GM12878 (cell line): ENCODE measurements at regions of chr10 and their contacts with region 1.

Region 1: DNA sequence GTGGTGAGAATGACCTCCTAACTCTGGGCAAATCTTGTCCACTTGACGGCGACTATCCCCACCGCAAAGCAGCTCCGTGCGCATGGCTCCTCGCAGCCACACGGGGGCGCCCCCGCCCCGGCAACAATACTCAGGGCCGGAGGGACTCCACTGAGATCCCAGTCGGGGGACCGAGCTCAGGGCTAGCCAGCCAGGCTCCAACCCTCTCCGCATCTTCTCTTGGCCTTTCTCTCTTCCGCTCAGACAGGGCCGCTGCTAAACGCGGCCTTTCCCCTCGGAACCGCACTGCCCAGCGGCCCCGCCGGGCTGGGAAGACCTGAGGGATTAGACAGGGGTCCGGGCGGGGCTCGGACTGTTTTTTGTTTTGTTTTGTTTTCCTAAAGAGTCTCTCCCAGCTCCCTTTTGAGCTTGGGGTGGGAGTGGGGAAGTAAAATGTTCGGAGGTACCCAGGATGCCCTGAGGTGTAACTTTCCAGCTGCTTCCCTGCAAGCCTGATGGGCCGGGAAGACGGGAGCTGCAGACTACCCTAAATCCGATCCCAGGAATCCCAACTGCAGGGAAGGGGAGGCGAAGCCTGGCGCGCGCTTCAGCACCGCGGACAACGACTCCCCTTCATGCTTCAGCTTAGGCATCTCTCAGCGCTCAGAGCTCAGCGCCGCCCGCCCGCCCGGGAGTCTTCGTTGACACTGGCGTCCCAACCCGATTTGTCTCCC is 2.7 kb downstream of the KCNIP2 start:
- DNase-seq: no peak
- ATAC-seq: peak; percentile 90
- H3K4me3 ChIP-seq: peak overlapping the region; percentile 81
- H3K27ac ChIP-seq: no peak overlapping the region
- H3K4me1 ChIP-seq: peaks cover 23% of the 10 kb centered on the region
- H3K27me3 ChIP-seq: no peaks in the 10 kb centered on the region
- CTCF ChIP-seq: peak; percentile 98 to 99 (median 98); a peak in 5 of 6 replicates
- EP300 ChIP-seq: no peak
- POLR2A ChIP-seq: no peak
- RAD21 ChIP-seq: peak; percentile 98

Region 2: GRCh38 chr10:101782811-101783735 is 57.8 kb before region 1 on chr10 and contains the start of gene NPM3:
- CTCF ChIA-PET with region 1: interaction called, 13 read pairs
- POLR2A ChIA-PET with region 1: no interaction called
- RAD21 ChIA-PET with region 1: interaction called, 4 read pairs
- SMC1A ChIA-PET with region 1: interaction called, 3 read pairs
- in situ Hi-C with region 1: no loop called
- intact Hi-C with region 1: no loop called
- DNase-seq: no peak
- ATAC-seq: peak; percentile 76
- H3K4me3 ChIP-seq: peak within 1 kb of the TSS; percentile 85
- H3K27ac ChIP-seq: peak within 1 kb of the TSS; percentile 71
- H3K4me1 ChIP-seq: peaks cover 41% of the 10 kb centered on the region
- H3K27me3 ChIP-seq: no peaks in the 10 kb centered on the region
- CTCF ChIP-seq: no peak
- EP300 ChIP-seq: no peak
- POLR2A ChIP-seq: peak; percentile 76
- RAD21 ChIP-seq: no peak
- polyA plus RNA-seq, gene NPM3: 19.7 to 49.6 TPM

Region 3: DNA sequence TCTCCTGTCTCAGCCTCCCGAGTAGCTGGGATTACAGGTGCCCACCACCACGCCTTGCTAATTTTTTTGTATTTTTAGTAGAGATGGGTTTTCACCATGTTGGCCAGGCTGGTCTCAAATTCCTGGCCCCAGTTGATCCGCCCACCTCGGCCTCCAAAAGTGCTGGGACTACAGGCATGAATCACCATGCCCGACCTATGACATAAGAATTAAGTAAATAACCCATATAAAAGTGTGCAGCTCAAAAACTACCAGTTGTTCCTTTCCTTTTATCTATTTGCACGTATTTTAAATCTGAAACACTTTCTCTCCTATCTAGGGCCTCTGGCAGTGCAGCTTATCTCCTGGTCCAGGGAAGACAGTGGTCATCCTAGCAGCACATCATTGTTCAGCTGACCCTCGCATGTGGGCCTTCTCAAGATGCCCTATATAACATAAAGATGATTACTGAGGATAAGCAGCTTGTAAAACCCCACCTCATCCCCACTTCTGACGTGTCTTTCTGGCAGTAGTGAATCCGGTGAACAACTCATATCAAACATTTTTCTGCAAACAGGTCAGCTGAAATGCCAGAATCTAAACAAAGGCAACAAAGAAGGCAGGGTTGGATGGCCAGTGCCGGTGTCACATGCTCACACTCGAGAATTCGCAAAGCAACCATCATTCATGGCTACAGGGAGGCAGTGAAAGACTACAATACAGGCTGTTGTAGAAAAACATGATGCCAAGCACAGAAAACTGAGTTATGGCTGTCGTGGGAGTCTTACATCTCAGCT is 38.7 kb after region 1 on chr10:
- CTCF ChIA-PET with region 1: interaction called, 398 read pairs
- POLR2A ChIA-PET with region 1: interaction called, 8 read pairs
- RAD21 ChIA-PET with region 1: interaction called, 206 read pairs
- SMC1A ChIA-PET with region 1: interaction called, 21 read pairs
- in situ Hi-C with region 1: no loop called
- intact Hi-C with region 1: no loop called
- DNase-seq: no peak
- ATAC-seq: no peak
- H3K4me3 ChIP-seq: no peak overlapping the region
- H3K27ac ChIP-seq: no peak overlapping the region
- H3K4me1 ChIP-seq: peaks cover 9% of the 10 kb centered on the region
- H3K27me3 ChIP-seq: no peaks in the 10 kb centered on the region
- CTCF ChIP-seq: no peak
- EP300 ChIP-seq: no peak
- POLR2A ChIP-seq: no peak
- RAD21 ChIP-seq: no peak

Region 4: GRCh38 chr10:101920546-101920945 is 79.6 kb after region 1 on chr10:
- CTCF ChIA-PET with region 1: interaction called, 13 read pairs
- POLR2A ChIA-PET with region 1: no interaction called
- RAD21 ChIA-PET with region 1: interaction called, 5 read pairs
- SMC1A ChIA-PET with region 1: interaction called, 4 read pairs
- in situ Hi-C with region 1: no loop called
- intact Hi-C with region 1: no loop called
- DNase-seq: no peak
- ATAC-seq: no peak
- H3K4me3 ChIP-seq: no peak overlapping the region
- H3K27ac ChIP-seq: no peak overlapping the region
- H3K4me1 ChIP-seq: peaks cover 3% of the 10 kb centered on the region; the same call in 1 of the 2 replicates
- H3K27me3 ChIP-seq: no peaks in the 10 kb centered on the region
- CTCF ChIP-seq: no peak
- EP300 ChIP-seq: no peak
- POLR2A ChIP-seq: no peak
- RAD21 ChIP-seq: no peak

Region 5: GRCh38 chr10:102001435-102002068 is 160.7 kb after region 1 on chr10:
- CTCF ChIA-PET with region 1: interaction called, 697 read pairs
- POLR2A ChIA-PET with region 1: interaction called, 14 read pairs
- RAD21 ChIA-PET with region 1: interaction called, 538 read pairs
- SMC1A ChIA-PET with region 1: interaction called, 407 read pairs
- in situ Hi-C with region 1: loop called (anchors 5 kb)
- intact Hi-C with region 1: no loop called
- DNase-seq: peak; percentile 95
- ATAC-seq: peak; percentile 84
- H3K4me3 ChIP-seq: peak overlapping the region; percentile 12; the same call in 1 of the 2 replicates
- H3K27ac ChIP-seq: peak overlapping the region; percentile 91
- H3K4me1 ChIP-seq: peaks cover 47% of the 10 kb centered on the region
- H3K27me3 ChIP-seq: no peaks in the 10 kb centered on the region
- CTCF ChIP-seq: no peak
- EP300 ChIP-seq: peak; percentile 93 to 98; a peak in 3 of 4 replicates
- POLR2A ChIP-seq: no peak
- RAD21 ChIP-seq: no peak

Region 6: GRCh38 chr10:102072673-102073527 is 232.0 kb after region 1 on chr10:
- CTCF ChIA-PET with region 1: interaction called, 159 read pairs
- POLR2A ChIA-PET with region 1: interaction called, 5 read pairs
- RAD21 ChIA-PET with region 1: interaction called, 82 read pairs
- SMC1A ChIA-PET with region 1: interaction called, 28 read pairs
- in situ Hi-C with region 1: loop called (anchors 5 kb)
- intact Hi-C with region 1: loop called (anchors 1 kb)
- DNase-seq: no peak
- ATAC-seq: peak; percentile 99
- H3K4me3 ChIP-seq: no peak overlapping the region
- H3K27ac ChIP-seq: no peak overlapping the region
- H3K4me1 ChIP-seq: no peaks in the 10 kb centered on the region
- H3K27me3 ChIP-seq: no peaks in the 10 kb centered on the region
- CTCF ChIP-seq: peak; percentile 94 to 96 (median 95)
- EP300 ChIP-seq: no peak
- POLR2A ChIP-seq: no peak
- RAD21 ChIP-seq: peak; percentile 92

Region 7: GRCh38 chr10:102578782-102579181 is 737.9 kb after region 1 on chr10:
- CTCF ChIA-PET with region 1: no interaction called
- POLR2A ChIA-PET with region 1: no interaction called
- RAD21 ChIA-PET with region 1: no interaction called
- SMC1A ChIA-PET with region 1: no interaction called
- in situ Hi-C with region 1: no loop called
- intact Hi-C with region 1: no loop called
- DNase-seq: no peak
- ATAC-seq: no peak
- H3K4me3 ChIP-seq: no peak overlapping the region
- H3K27ac ChIP-seq: no peak overlapping the region
- H3K4me1 ChIP-seq: no peaks in the 10 kb centered on the region
- H3K27me3 ChIP-seq: no peaks in the 10 kb centered on the region
- CTCF ChIP-seq: no peak
- EP300 ChIP-seq: no peak
- POLR2A ChIP-seq: no peak
- RAD21 ChIP-seq: no peak